ENCODE measurements at regions of chr19 and their contacts with region 1.

Region 1: DNA sequence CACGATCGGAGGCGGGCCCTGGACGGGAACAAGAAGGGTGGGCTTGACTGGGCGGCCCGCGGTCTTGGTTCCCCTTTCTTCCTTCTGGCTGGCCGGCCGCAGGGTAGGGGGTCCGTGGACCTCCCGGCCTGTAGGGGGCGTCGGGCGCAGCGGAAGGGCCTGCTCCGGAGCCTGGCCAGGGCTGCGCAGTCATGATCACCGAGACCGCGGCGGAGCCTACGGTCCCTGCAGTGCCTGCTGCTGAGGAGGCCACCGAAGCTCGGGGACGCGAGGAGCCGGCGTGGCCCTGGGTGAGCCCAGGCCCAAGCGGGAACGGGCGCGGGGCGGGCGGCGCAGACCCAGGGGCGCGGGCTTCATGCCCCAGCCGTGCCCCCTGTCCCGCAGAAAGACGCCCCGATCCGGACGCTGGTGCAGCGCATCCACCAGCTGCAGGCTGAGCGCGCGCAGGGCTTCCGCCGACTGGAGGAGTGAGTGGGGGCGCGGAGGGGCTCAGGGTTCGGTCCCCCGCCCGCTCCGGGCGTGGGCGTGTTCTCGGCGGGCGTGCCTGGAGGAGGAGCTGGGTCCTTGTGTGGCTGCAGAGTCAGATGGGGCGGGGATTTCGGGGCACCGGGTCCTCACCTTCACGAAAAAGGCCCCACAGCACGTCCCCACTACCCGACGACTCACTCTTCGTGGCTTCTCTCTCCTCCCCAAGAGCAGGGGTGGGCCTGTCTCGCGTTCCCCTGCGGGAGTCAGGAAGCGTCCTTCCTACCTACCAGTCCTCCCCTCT is at the start of gene REX1BD:
- DNase-seq: peak; percentile 66
- H3K4me3 ChIP-seq: peak within 1 kb of the TSS; percentile 72 to 89 (median 83)
- H3K27ac ChIP-seq: peak within 1 kb of the TSS; percentile 35
- H3K4me1 ChIP-seq: peaks cover 19% of the 10 kb centered on the region
- H3K27me3 ChIP-seq: no peaks in the 10 kb centered on the region
- CTCF ChIP-seq: peak; percentile 69 to 85
- total RNA-seq, gene REX1BD: 30.0 to 59.0 TPM

Region 2: GRCh38 chr19:18469069-18469846 is 119.5 kb before region 1 on chr19:
- CTCF ChIA-PET with region 1: no interaction called
- dilution Hi-C with region 1: no loop called
- in situ Hi-C with region 1: no loop called
- intact Hi-C with region 1: loop called (anchors 2 kb)
- DNase-seq: no peak
- H3K4me3 ChIP-seq: no peak overlapping the region
- H3K27ac ChIP-seq: no peak overlapping the region
- H3K4me1 ChIP-seq: peaks cover 8% of the 10 kb centered on the region
- H3K27me3 ChIP-seq: no peaks in the 10 kb centered on the region
- CTCF ChIP-seq: peak; percentile 68 to 83

Region 3: DNA sequence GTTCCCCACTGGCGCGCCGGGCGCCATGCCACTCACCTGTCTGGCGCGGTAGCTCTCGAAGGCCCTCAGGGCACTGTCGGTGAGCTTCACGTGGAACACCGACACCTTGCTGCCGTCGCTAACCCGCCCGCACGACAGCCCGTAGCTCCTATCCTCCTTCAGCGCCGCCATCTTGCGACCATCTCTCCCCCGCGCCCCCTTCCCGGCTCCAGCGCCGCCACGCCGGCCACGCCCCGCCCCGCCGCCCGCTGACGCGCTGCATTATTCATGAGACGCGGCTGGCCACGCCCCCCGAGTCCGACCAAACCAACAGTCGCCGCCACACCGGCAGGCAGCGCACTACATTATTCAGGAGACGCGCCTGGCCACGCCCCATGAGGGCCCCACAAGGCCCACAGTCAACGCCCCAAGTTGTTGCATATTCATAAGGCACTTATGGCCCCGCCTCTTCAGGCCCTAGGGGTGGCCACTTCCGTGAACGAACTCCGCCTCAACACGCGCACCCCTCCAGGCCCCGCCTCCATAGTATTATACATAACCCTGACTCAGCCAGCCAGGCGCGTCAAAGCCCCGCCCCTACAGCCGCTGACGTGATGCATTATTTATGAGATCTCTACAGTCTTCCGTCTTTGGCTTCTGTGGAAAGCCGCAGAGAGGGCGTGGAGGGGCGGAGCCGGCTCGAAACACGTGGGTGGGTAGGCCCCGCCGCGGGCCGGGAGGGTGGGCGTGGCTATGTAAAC is 66.7 kb before region 1 on chr19 and contains the start of gene ELL:
- CTCF ChIA-PET with region 1: interaction called, 10 read pairs
- dilution Hi-C with region 1: loop called (anchors 5 kb)
- in situ Hi-C with region 1: no loop called
- intact Hi-C with region 1: loop called (anchors 1 kb)
- DNase-seq: peak; percentile 100
- H3K4me3 ChIP-seq: peak within 1 kb of the TSS; percentile 69 to 97 (median 96)
- H3K27ac ChIP-seq: peak within 1 kb of the TSS; percentile 92
- H3K4me1 ChIP-seq: peaks cover 24% of the 10 kb centered on the region
- H3K27me3 ChIP-seq: no peaks in the 10 kb centered on the region
- CTCF ChIP-seq: peak in 1 of 2 donors; percentile 26
- total RNA-seq, gene ELL: 17.3 to 27.7 TPM

Region 4: GRCh38 chr19:18644196-18645034 is 55.6 kb after region 1 on chr19:
- CTCF ChIA-PET with region 1: no interaction called
- dilution Hi-C with region 1: loop called (anchors 5 kb)
- in situ Hi-C with region 1: no loop called
- intact Hi-C with region 1: no loop called
- DNase-seq: peak; percentile 18
- H3K4me3 ChIP-seq: no peak overlapping the region
- H3K27ac ChIP-seq: no peak overlapping the region
- H3K4me1 ChIP-seq: peaks cover 21% of the 10 kb centered on the region
- H3K27me3 ChIP-seq: no peaks in the 10 kb centered on the region
- CTCF ChIP-seq: no peak

Region 5: GRCh38 chr19:18771328-18772242 is 182.8 kb after region 1 on chr19:
- CTCF ChIA-PET with region 1: no interaction called
- dilution Hi-C with region 1: no loop called
- in situ Hi-C with region 1: no loop called
- intact Hi-C with region 1: loop called (anchors 5 kb)
- DNase-seq: no peak
- H3K4me3 ChIP-seq: no peak overlapping the region
- H3K27ac ChIP-seq: no peak overlapping the region
- H3K4me1 ChIP-seq: peaks cover 29% of the 10 kb centered on the region
- H3K27me3 ChIP-seq: no peaks in the 10 kb centered on the region
- CTCF ChIP-seq: peak in 1 of 2 donors; percentile 19

Region 6: DNA sequence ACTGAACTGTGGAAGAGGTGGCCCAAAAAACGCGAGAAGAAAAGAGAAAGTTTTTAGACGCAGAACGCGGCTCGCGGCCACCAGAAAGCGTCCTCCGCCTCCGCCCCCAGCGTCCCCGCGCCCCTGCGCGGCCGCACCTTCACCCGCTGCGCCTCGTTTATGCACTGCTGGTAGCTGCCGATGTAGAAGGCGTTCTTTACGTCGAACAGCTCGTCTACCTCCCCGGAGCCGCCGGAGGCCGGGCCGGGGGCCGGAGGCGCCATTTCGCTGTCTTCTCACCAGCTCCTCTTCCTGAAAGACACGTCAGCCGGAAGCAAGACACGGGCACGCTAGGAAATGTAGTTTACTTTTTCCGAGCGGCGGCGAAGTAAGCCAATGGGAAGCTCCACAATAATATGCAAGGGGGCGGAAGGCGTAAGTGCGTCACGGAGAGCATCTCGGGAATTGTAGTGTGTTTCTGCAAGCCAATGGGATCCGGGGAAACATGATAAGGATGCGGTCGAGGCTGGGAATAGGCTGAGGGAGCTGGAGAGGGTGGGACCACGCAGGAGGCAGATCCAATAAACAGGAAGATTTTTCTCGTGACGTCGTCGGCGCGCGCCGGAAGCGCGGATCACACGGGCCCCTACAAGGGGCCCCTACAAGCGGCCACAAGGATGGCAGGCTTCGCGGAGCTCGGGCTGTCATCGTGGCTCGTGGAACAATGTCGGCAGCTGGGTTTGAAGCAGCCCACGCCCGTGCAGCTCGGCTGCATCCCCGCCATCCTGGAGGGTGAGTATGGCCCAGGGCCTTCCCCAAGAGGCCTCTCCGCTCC is 330.5 kb after region 1 on chr19 and contains the starts of genes COPE and DDX49:
- CTCF ChIA-PET with region 1: no interaction called
- dilution Hi-C with region 1: no loop called
- in situ Hi-C with region 1: no loop called
- intact Hi-C with region 1: loop called (anchors 5 kb)
- DNase-seq: peak; percentile 100
- H3K4me3 ChIP-seq: peak within 1 kb of the TSS; percentile 77 to 96 (median 85)
- H3K27ac ChIP-seq: peak within 1 kb of the TSS; percentile 90
- H3K4me1 ChIP-seq: peaks cover 15% of the 10 kb centered on the region
- H3K27me3 ChIP-seq: no peaks in the 10 kb centered on the region
- CTCF ChIP-seq: peak in 1 of 2 donors; percentile 10
- total RNA-seq, gene COPE: 180 to 226 TPM
- total RNA-seq, gene DDX49: 44.2 to 47.7 TPM

Measured in mammary epithelial cell (primary cell).